ENCODE measurements at regions of chr22 and their contacts with region 1.

Region 1: GRCh38 chr22:49724893-49725474 is 102.7 kb downstream of the BRD1 start:
- DNase-seq: peak; percentile 37 to 79 (median 63)
- ATAC-seq: peak; percentile 83
- H3K4me3 ChIP-seq: peak overlapping the region; percentile 69
- H3K4me3 Mint-ChIP-seq: peak overlapping the region; percentile 32 to 99 (median 84)
- H3K27ac ChIP-seq: peak overlapping the region; percentile 65
- H3K27ac Mint-ChIP-seq: peak overlapping the region in 2 of 9 donors; percentile 52 to 84
- H3K4me1 ChIP-seq: peaks cover 5 to 10% of the 10 kb centered on the region in 2 donors
- H3K4me1 Mint-ChIP-seq: peaks cover 3 to 35% (median 24%) of the 10 kb centered on the region in 7 donors
- H3K27me3 ChIP-seq: peaks cover 0 to 5% of the 10 kb centered on the region in 2 donors
- H3K27me3 Mint-ChIP-seq: peaks cover 10 to 38% (median 20%) of the 10 kb centered on the region in 5 donors

Region 2: GRCh38 chr22:49305214-49305909 is 419.6 kb before region 1 on chr22:
- CTCF ChIA-PET with region 1: no interaction called
- POLR2A ChIA-PET with region 1: no interaction called
- intact Hi-C with region 1: loop called in 1 of 2 experiments (anchors 1 kb)
- DNase-seq: peak; percentile 12 to 78 (median 48)
- ATAC-seq: peak; percentile 64
- H3K4me3 ChIP-seq: no peak overlapping the region
- H3K4me3 Mint-ChIP-seq: no peak overlapping the region
- H3K27ac ChIP-seq: no peak overlapping the region
- H3K27ac Mint-ChIP-seq: no peak overlapping the region
- H3K4me1 ChIP-seq: no peaks in the 10 kb centered on the region
- H3K4me1 Mint-ChIP-seq: peaks cover 0 to 3% (median 0%) of the 10 kb centered on the region in 7 donors
- H3K27me3 ChIP-seq: no peaks in the 10 kb centered on the region
- H3K27me3 Mint-ChIP-seq: peaks cover 10 to 47% (median 24%) of the 10 kb centered on the region in 5 donors

Measured in naive thymus-derived CD4-positive, alpha-beta T cell (primary cell).